ENCODE measurements at regions of chr17 and their contacts with region 1.

Region 1: GRCh38 chr17:65100316-65101140 is 36.6 kb upstream of the RGS9 start:
- DNase-seq: peak; percentile 89
- H3K4me3 ChIP-seq: peak overlapping the region; percentile 39 to 60 (median 41)
- H3K27ac ChIP-seq: peak overlapping the region; percentile 65 to 82 (median 70)
- H3K4me1 ChIP-seq: peaks cover 6 to 22% (median 8%) of the 10 kb centered on the region in 4 donors
- H3K27me3 ChIP-seq: no peaks in the 10 kb centered on the region
- CTCF ChIP-seq: peak; percentile 95 to 99 (median 98)
- EP300 ChIP-seq: no peak
- POLR2A ChIP-seq: peak; percentile 61

Region 2: GRCh38 chr17:64968652-64969501 is 131.7 kb before region 1 on chr17:
- in situ Hi-C with region 1: loop called in 2 of 4 experiments (anchors 10 to 25 kb)
- intact Hi-C with region 1: no loop called
- DNase-seq: no peak
- H3K4me3 ChIP-seq: no peak overlapping the region
- H3K27ac ChIP-seq: peak overlapping the region; percentile 3 to 50 (median 20)
- H3K4me1 ChIP-seq: peaks cover 0 to 27% (median 9%) of the 10 kb centered on the region in 4 donors
- H3K27me3 ChIP-seq: no peaks in the 10 kb centered on the region
- CTCF ChIP-seq: no peak
- EP300 ChIP-seq: no peak
- POLR2A ChIP-seq: no peak

Region 3: DNA sequence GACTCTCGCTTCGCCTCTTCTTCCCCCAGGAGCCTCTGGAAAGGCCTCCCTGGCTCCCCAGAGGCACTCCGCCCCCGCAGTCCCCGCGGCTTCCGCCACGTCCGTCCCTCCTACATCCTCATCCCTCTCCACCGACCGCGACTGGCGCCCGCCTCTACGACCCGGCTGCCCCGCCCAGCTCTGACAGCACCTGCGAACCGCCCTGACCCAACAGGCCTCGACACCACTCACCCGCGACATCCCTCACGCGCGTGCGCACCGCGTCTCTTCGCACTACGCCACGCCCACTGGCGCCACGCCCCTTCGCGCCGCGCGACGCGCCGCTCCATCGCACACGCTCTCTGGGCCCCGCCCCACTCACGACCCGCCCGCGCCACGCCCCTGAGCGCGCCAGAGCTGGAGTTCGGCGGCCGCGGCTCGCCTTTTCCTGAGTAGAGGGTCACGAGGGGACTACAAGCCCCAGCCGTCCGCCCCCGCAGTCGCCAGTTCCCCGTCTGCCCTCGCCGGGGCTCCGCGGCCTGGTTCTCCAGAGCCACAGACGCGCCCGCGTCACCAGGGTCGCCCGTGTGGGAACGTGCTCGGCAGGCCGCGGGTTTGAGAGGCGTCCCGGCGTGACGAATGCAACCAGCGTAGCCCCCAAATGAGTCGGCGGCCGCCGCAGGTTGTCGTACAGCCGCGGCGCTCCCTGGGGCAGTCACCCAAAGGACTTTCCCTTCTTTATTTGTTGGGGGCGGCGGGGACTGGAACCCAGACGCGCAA is 125.0 kb before region 1 on chr17:
- in situ Hi-C with region 1: loop called in 1 of 4 experiments (anchors 25 kb)
- intact Hi-C with region 1: loop called (anchors 10 kb)
- DNase-seq: peak; percentile 97
- H3K4me3 ChIP-seq: peak overlapping the region; percentile 54 to 87 (median 85)
- H3K27ac ChIP-seq: peak overlapping the region; percentile 96 to 99 (median 99)
- H3K4me1 ChIP-seq: peaks cover 5 to 21% (median 13%) of the 10 kb centered on the region in 4 donors
- H3K27me3 ChIP-seq: no peaks in the 10 kb centered on the region
- CTCF ChIP-seq: no peak
- EP300 ChIP-seq: no peak
- POLR2A ChIP-seq: peak; percentile 93

Region 4: DNA sequence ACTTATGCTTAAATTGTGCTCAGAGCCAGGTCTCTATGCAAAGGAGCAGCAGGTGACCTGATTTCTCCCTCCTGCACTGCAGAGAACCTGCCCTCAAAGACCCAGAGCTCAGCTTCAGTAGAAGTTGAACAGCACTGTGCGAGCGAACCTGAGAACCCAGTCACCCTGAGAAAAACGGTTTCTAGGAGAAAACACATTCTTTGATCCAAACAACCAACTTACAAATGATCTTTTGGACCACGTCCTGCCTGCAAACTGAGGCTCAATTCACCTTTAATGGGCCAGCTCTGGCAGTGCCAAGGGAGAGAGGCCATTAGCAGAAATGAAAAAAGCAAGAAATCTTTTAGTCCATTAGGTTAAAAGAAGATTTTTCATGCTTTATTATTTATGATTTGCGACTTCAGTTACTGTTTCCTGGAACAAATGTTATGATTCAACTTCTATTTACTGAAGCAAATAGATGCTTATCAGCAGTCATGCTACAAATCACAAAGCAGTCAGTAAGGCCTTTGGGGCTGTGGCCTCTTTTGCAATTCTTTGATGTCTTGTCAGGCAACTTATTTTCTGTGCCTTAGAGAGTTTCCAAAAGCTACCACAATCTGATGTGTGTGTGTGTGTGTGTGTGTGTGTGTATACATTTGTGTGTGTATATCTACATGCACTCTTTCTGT is 115.5 kb before region 1 on chr17:
- in situ Hi-C with region 1: no loop called
- intact Hi-C with region 1: loop called (anchors 10 kb)
- DNase-seq: peak; percentile 29
- H3K4me3 ChIP-seq: no peak overlapping the region
- H3K27ac ChIP-seq: peak overlapping the region; percentile 80 to 86 (median 82)
- H3K4me1 ChIP-seq: peaks cover 0 to 26% (median 2%) of the 10 kb centered on the region in 4 donors
- H3K27me3 ChIP-seq: no peaks in the 10 kb centered on the region
- CTCF ChIP-seq: no peak
- EP300 ChIP-seq: no peak
- POLR2A ChIP-seq: no peak

Region 5: GRCh38 chr17:65055348-65056261 is 44.9 kb before region 1 on chr17:
- in situ Hi-C with region 1: no loop called
- intact Hi-C with region 1: loop called (anchors 2 kb)
- DNase-seq: peak; percentile 69
- H3K4me3 ChIP-seq: peak overlapping the region; percentile 66 to 97 (median 80)
- H3K27ac ChIP-seq: peak overlapping the region; percentile 98 to 99 (median 98)
- H3K4me1 ChIP-seq: peaks cover 14 to 55% (median 22%) of the 10 kb centered on the region in 4 donors
- H3K27me3 ChIP-seq: no peaks in the 10 kb centered on the region
- CTCF ChIP-seq: no peak
- EP300 ChIP-seq: no peak
- POLR2A ChIP-seq: no peak